CD4-positive, alpha-beta memory T cell (primary cell): ENCODE measurements at regions of chr3 and their contacts with region 1.

Region 1: GRCh38 chr3:7800006-7800780 is 701.4 kb upstream of the LMCD1 start:
- DNase-seq: peak in 4 of 5 donors; percentile 16 to 34 (median 20)
- H3K4me3 ChIP-seq: no peak overlapping the region
- H3K4me3 Mint-ChIP-seq: no peak overlapping the region
- H3K27ac ChIP-seq: no peak overlapping the region
- H3K27ac Mint-ChIP-seq: no peak overlapping the region
- H3K4me1 ChIP-seq: no peaks in the 10 kb centered on the region
- H3K4me1 Mint-ChIP-seq: peaks cover 0 to 2% (median 0%) of the 10 kb centered on the region in 4 donors
- H3K27me3 ChIP-seq: no peaks in the 10 kb centered on the region
- H3K27me3 Mint-ChIP-seq: no peaks in the 10 kb centered on the region

Region 2: DNA sequence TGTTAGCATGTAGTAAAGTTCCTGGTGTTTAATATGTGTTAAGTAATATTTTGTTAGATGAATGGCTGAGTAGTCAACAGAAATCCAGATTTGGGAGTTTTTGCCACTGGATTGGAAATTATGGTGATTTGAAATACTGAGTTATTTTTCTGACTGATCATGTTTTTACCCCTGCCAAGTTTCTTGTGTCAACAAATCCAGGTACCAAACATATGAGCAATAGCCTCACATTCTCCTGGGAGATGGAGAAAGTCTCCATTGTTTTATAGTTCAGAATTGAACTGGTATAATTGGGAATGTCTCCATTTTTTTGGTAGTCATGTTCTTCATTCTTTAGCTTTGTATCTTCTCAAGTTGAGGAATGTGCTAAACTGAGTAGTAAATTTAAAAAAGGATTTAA is 65.7 kb before region 1 on chr3:
- CTCF ChIA-PET with region 1: no interaction called
- POLR2A ChIA-PET with region 1: no interaction called
- intact Hi-C with region 1: no loop called
- DNase-seq: no peak
- H3K4me3 ChIP-seq: no peak overlapping the region
- H3K4me3 Mint-ChIP-seq: no peak overlapping the region
- H3K27ac ChIP-seq: no peak overlapping the region
- H3K27ac Mint-ChIP-seq: no peak overlapping the region
- H3K4me1 ChIP-seq: no peaks in the 10 kb centered on the region
- H3K4me1 Mint-ChIP-seq: peaks cover 0 to 2% (median 0%) of the 10 kb centered on the region in 4 donors
- H3K27me3 ChIP-seq: no peaks in the 10 kb centered on the region
- H3K27me3 Mint-ChIP-seq: no peaks in the 10 kb centered on the region

Region 3: DNA sequence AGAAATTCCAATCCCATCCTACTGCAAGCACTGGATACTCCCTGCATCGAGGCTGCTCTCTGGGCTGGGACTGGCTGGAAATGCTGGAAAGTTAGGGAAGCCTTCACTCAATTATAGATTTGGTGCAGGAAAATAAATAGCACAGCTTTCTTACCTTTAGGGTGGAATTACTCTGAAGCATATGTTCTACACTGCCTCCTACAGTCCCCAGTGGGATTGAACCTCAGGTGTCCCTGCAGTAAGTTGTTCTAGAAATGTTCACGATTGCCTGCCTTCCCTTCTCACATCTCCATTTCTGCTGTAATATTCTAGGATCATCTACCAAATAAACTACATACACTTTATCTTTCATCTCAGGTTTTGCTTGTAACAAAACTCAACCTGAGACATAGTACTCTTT is 164.7 kb after region 1 on chr3:
- CTCF ChIA-PET with region 1: no interaction called
- POLR2A ChIA-PET with region 1: no interaction called
- intact Hi-C with region 1: loop called (anchors 5 kb)
- DNase-seq: peak in 1 of 5 donors; percentile 4
- H3K4me3 ChIP-seq: no peak overlapping the region
- H3K4me3 Mint-ChIP-seq: no peak overlapping the region
- H3K27ac ChIP-seq: no peak overlapping the region
- H3K27ac Mint-ChIP-seq: no peak overlapping the region
- H3K4me1 ChIP-seq: no peaks in the 10 kb centered on the region
- H3K4me1 Mint-ChIP-seq: no peaks in the 10 kb centered on the region
- H3K27me3 ChIP-seq: no peaks in the 10 kb centered on the region
- H3K27me3 Mint-ChIP-seq: no peaks in the 10 kb centered on the region

Region 4: GRCh38 chr3:8111069-8111798 is 311.0 kb after region 1 on chr3:
- CTCF ChIA-PET with region 1: interaction called, 14 read pairs
- POLR2A ChIA-PET with region 1: no interaction called
- intact Hi-C with region 1: no loop called
- DNase-seq: peak; percentile 47 to 59 (median 55)
- H3K4me3 ChIP-seq: no peak overlapping the region
- H3K4me3 Mint-ChIP-seq: peak overlapping the region in 5 of 8 donors; percentile 44 to 74 (median 57)
- H3K27ac ChIP-seq: no peak overlapping the region
- H3K27ac Mint-ChIP-seq: no peak overlapping the region
- H3K4me1 ChIP-seq: peaks cover 4% of the 10 kb centered on the region
- H3K4me1 Mint-ChIP-seq: peaks cover 0 to 5% (median 2%) of the 10 kb centered on the region in 4 donors
- H3K27me3 ChIP-seq: no peaks in the 10 kb centered on the region
- H3K27me3 Mint-ChIP-seq: peaks cover 2 to 5% of the 10 kb centered on the region in 2 donors